ENCODE measurements at regions of chr19 and their contacts with region 1.

Region 1: DNA sequence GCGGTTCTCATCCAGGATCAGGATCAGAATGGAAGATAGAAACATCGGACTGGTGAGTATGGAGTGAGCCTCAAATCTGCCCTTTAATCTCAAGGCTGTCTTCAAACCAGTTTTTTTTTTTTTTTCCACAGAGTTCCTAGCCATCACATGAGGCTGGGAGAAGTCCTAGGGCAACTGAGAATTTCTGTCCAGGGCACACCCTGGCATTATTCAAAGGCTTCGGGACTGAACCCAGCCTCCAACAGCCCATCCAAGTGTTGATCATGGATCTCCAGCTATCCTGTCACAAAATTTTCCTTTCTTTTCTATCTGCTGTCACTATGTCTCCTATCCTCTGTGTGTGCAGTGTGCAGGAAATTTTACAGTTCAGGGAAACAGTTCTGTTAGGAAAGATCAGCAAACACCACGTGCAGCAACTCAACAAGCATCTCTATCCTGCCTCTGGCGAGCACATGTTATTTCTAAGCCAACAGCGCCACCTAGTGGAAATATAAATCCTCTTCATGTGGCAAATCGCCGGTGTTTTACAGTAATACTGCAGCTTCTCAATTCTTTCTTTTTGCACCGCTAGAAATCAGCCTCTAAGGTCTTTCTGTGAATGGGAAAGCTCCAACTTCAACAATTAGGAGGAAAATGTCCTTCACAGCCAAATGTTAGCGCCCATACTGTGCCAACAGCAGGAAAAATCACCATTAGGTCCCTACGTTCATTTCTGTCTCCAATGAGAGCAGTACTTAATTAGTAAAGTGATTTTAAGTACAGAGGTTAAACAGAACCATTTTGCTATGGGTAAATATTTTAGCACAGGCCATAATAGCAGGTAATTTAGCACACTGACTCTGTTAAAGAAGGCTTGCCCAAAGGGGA is 21.4 kb upstream of the ZNF181 start:
- DNase-seq: peak; percentile 11 to 86 (median 55)
- ATAC-seq: peak; percentile 49
- H3K4me3 ChIP-seq: no peak overlapping the region
- H3K4me3 Mint-ChIP-seq: no peak overlapping the region
- H3K27ac ChIP-seq: no peak overlapping the region
- H3K27ac Mint-ChIP-seq: no peak overlapping the region
- H3K4me1 ChIP-seq: no peaks in the 10 kb centered on the region
- H3K4me1 Mint-ChIP-seq: no peaks in the 10 kb centered on the region
- H3K27me3 ChIP-seq: peaks cover 0 to 4% of the 10 kb centered on the region in 2 experiments
- H3K27me3 Mint-ChIP-seq: peaks cover 35% of the 10 kb centered on the region
- CTCF ChIP-seq: peak; percentile 81

Region 2: GRCh38 chr19:34041925-34042521 is 670.6 kb before region 1 on chr19:
- CTCF ChIA-PET with region 1: no interaction called
- POLR2A ChIA-PET with region 1: no interaction called
- intact Hi-C with region 1: loop called in 1 of 2 experiments (anchors 10 kb)
- DNase-seq: peak; percentile 36 to 79 (median 63)
- ATAC-seq: no peak
- H3K4me3 ChIP-seq: no peak overlapping the region
- H3K4me3 Mint-ChIP-seq: no peak overlapping the region
- H3K27ac ChIP-seq: no peak overlapping the region
- H3K27ac Mint-ChIP-seq: no peak overlapping the region
- H3K4me1 ChIP-seq: no peaks in the 10 kb centered on the region
- H3K4me1 Mint-ChIP-seq: no peaks in the 10 kb centered on the region
- H3K27me3 ChIP-seq: peaks cover 0 to 2% of the 10 kb centered on the region in 2 experiments
- H3K27me3 Mint-ChIP-seq: peaks cover 30% of the 10 kb centered on the region
- CTCF ChIP-seq: peak; percentile 74

Region 3: GRCh38 chr19:34639491-34640085 is 73.0 kb before region 1 on chr19:
- CTCF ChIA-PET with region 1: interaction called, 177 read pairs
- POLR2A ChIA-PET with region 1: no interaction called
- intact Hi-C with region 1: loop called (anchors 1 kb)
- DNase-seq: peak; percentile 9 to 86 (median 66)
- ATAC-seq: peak; percentile 56
- H3K4me3 ChIP-seq: no peak overlapping the region
- H3K4me3 Mint-ChIP-seq: no peak overlapping the region
- H3K27ac ChIP-seq: no peak overlapping the region
- H3K27ac Mint-ChIP-seq: no peak overlapping the region
- H3K4me1 ChIP-seq: no peaks in the 10 kb centered on the region
- H3K4me1 Mint-ChIP-seq: no peaks in the 10 kb centered on the region
- H3K27me3 ChIP-seq: no peaks in the 10 kb centered on the region
- H3K27me3 Mint-ChIP-seq: no peaks in the 10 kb centered on the region
- CTCF ChIP-seq: peak; percentile 86

Region 4: GRCh38 chr19:34645551-34645950 is 67.1 kb before region 1 on chr19:
- CTCF ChIA-PET with region 1: interaction called, 177 read pairs
- POLR2A ChIA-PET with region 1: no interaction called
- intact Hi-C with region 1: no loop called
- DNase-seq: no peak
- ATAC-seq: no peak
- H3K4me3 ChIP-seq: no peak overlapping the region
- H3K4me3 Mint-ChIP-seq: no peak overlapping the region
- H3K27ac ChIP-seq: no peak overlapping the region
- H3K27ac Mint-ChIP-seq: no peak overlapping the region
- H3K4me1 ChIP-seq: no peaks in the 10 kb centered on the region
- H3K4me1 Mint-ChIP-seq: no peaks in the 10 kb centered on the region
- H3K27me3 ChIP-seq: no peaks in the 10 kb centered on the region
- H3K27me3 Mint-ChIP-seq: peaks cover 2% of the 10 kb centered on the region
- CTCF ChIP-seq: no peak

Region 5: DNA sequence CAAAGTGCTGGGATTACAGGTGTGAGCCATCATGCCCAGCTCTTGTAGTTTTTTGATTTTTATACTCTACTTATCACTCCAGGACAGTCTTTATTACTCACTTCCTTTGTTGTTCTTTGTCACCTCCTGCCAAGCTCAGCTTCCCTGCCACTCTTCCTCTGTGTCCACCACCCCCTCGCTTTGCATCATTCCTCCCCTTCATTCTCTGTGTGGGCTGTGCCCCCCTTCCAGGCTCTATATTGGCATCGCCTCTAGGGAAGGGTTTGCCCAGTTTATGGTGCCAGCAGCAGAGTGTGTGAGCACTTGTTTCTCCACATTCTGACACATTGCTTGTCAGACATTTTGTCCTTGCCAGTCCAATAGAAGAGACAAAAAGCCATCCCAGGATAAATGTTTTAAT is 20.1 kb before region 1 on chr19:
- CTCF ChIA-PET with region 1: interaction called, 11 read pairs
- POLR2A ChIA-PET with region 1: no interaction called
- intact Hi-C with region 1: no loop called
- DNase-seq: no peak
- ATAC-seq: no peak
- H3K4me3 ChIP-seq: no peak overlapping the region
- H3K4me3 Mint-ChIP-seq: no peak overlapping the region
- H3K27ac ChIP-seq: no peak overlapping the region
- H3K27ac Mint-ChIP-seq: no peak overlapping the region
- H3K4me1 ChIP-seq: no peaks in the 10 kb centered on the region
- H3K4me1 Mint-ChIP-seq: no peaks in the 10 kb centered on the region
- H3K27me3 ChIP-seq: no peaks in the 10 kb centered on the region
- H3K27me3 Mint-ChIP-seq: peaks cover 49% of the 10 kb centered on the region
- CTCF ChIP-seq: no peak

Region 6: DNA sequence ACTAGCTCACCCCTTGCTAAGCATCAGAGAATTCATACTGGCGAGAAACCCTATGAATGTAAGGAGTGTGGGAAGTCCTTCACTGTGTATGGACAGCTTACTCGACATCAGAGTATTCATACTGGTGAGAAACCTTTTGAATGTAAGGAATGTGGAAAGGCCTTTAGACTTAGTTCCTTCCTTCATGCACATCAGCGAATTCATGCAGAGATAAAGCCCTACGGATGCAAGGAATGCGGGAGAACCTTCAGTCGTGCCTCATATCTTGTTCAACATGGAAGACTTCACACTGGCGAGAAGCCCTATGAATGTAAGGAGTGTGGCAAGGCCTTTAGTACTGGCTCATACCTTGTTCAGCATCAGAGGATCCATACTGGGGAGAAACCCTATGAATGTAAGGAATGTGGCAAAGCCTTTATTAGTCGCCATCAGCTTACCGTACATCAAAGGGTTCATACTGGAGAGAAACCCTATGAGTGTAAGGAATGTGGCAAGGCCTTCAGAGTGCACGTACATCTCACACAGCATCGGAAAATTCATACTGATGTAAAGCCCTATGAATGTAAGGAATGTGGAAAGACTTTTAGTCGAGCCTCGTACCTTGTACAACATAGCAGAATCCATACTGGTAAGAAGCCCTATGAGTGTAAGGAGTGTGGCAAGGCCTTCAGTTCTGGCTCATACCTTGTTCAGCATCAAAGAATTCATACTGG is 231.4 kb after region 1 on chr19:
- CTCF ChIA-PET with region 1: no interaction called
- POLR2A ChIA-PET with region 1: no interaction called
- intact Hi-C with region 1: no loop called
- DNase-seq: no peak
- ATAC-seq: no peak
- H3K4me3 ChIP-seq: no peak overlapping the region
- H3K4me3 Mint-ChIP-seq: no peak overlapping the region
- H3K27ac ChIP-seq: no peak overlapping the region
- H3K27ac Mint-ChIP-seq: no peak overlapping the region
- H3K4me1 ChIP-seq: no peaks in the 10 kb centered on the region
- H3K4me1 Mint-ChIP-seq: no peaks in the 10 kb centered on the region
- H3K27me3 ChIP-seq: no peaks in the 10 kb centered on the region
- H3K27me3 Mint-ChIP-seq: no peaks in the 10 kb centered on the region
- CTCF ChIP-seq: no peak